Transverse colon (tissue), 4 donors: ENCODE measurements at regions of chr4 and their contacts with region 1.

Region 1: DNA sequence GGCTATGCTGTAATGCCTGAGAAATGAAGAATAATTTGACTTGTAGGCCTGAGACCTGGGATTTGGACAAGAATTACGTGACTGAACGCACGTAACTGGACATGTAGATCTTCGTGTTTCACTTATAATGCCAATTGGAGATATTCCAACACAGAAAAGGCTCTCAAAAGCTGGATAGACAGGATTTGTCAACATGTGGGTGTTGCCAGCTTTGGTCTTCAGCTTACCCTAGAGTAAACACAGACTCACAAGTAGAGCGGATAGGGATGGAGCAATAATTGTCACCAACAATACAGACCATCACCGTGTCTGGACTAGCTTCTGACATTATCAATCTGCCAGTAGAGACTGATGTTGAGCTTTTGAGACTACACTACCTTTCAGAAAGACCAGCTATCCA is 1511.0 kb upstream of the ADGRL3 start:
- DNase-seq: no peak
- H3K4me3 ChIP-seq: no peak overlapping the region
- H3K27ac ChIP-seq: no peak overlapping the region
- H3K4me1 ChIP-seq: no peaks in the 10 kb centered on the region
- H3K27me3 ChIP-seq: no peaks in the 10 kb centered on the region
- CTCF ChIP-seq: no peak
- EP300 ChIP-seq: no peak
- POLR2A ChIP-seq: no peak

Region 2: GRCh38 chr4:59647011-59647410 is 42.1 kb before region 1 on chr4:
- in situ Hi-C with region 1: loop called in 1 of 4 experiments (anchors 5 kb)
- intact Hi-C with region 1: no loop called
- DNase-seq: no peak
- H3K4me3 ChIP-seq: no peak overlapping the region
- H3K27ac ChIP-seq: no peak overlapping the region
- H3K4me1 ChIP-seq: no peaks in the 10 kb centered on the region
- H3K27me3 ChIP-seq: no peaks in the 10 kb centered on the region
- CTCF ChIP-seq: no peak
- EP300 ChIP-seq: no peak
- POLR2A ChIP-seq: no peak